ENCODE measurements at regions of chr2 and their contacts with region 1.

Region 1: GRCh38 chr2:207473049-207473930 is 56.5 kb upstream of the CREB1 start:
- ATAC-seq: peak; percentile 71 to 95 (median 90)
- H3K4me3 ChIP-seq: no peak overlapping the region
- H3K27ac ChIP-seq: peak overlapping the region; percentile 31 to 36
- H3K4me1 ChIP-seq: peaks cover 31 to 48% of the 10 kb centered on the region in 2 donors

Region 2: GRCh38 chr2:206783718-206784117 is 689.6 kb before region 1 on chr2:
- in situ Hi-C with region 1: loop called in 4 of 9 experiments (anchors 25 kb)
- ATAC-seq: peak in 2 of 8 experiments; percentile 29 to 49
- H3K4me3 ChIP-seq: no peak overlapping the region
- H3K27ac ChIP-seq: no peak overlapping the region
- H3K4me1 ChIP-seq: no peaks in the 10 kb centered on the region

Region 3: DNA sequence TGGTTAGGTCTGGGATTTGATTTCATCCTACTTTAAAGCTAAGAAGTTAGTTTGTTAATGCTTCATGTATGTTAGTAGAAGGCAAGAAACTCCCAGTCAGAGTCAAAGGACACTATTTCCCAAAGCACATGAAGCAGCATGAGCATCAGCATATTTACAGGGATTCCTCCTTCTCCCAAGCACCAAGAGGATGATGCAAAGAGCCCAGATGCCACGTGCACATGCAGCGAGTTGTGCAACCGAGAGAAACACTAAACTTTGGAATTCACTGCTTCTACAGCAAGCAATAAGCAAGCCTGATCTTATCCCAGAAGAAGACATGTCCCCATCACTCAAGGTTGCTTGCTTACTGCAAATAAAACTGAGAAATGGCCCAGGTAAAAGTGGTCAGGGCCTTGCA is 501.5 kb before region 1 on chr2:
- in situ Hi-C with region 1: loop called in 4 of 9 experiments (anchors 5 to 25 kb)
- ATAC-seq: peak in 3 of 8 experiments; percentile 37 to 93 (median 51)
- H3K4me3 ChIP-seq: no peak overlapping the region
- H3K27ac ChIP-seq: no peak overlapping the region
- H3K4me1 ChIP-seq: peaks cover 2 to 23% of the 10 kb centered on the region in 2 donors

Region 4: DNA sequence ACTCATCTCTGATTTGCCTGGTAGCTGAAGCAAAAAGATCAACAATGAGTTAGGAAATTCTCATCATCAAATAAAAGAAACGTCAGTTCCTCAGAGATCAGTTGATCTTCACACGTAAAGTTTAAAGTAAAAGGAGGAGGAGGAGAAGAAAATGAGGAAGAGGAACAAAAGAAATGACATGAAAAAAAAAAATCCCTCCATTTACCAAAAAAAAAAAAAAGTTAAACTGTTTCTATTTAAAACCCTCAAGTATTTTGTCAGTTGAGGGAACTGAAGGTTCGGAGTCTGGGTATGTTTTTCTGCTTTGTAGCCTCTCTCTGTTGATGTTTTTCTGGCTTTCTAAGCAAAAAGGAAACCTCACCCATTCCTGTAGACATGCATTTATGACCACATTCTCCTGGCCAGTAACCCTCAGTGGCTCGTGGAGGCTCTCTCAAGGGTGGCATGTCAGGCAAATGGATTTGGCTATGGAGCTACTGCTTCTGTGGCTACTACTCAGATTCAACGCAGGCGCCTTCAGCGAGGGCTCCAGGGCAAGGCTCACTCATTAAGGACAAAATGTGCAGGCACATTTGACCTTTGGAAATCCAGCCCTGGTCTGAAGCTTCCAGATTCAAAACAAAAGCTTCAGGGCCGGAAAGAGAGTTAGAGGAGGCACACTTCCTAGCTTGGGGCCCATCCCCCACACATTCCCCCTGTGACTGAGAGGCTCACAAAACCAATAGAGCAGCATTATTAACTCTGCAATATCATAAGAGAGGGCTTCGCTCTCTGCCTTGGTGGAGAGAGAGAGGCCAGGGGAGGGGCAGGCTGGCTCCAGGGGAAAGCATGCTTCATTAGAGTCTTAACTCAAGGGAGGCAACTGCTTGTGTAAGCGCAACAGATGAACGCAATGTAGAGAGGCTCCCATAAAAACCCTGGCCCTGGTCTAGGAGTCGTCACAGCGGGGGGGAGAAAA is 329.8 kb before region 1 on chr2:
- in situ Hi-C with region 1: no loop called
- ATAC-seq: peak; percentile 55 to 97 (median 94)
- H3K4me3 ChIP-seq: peak overlapping the region in 2 of 5 donors; percentile 10 to 11
- H3K27ac ChIP-seq: peak overlapping the region; percentile 41 to 51
- H3K4me1 ChIP-seq: peaks cover 29 to 33% of the 10 kb centered on the region in 2 donors

Region 5: DNA sequence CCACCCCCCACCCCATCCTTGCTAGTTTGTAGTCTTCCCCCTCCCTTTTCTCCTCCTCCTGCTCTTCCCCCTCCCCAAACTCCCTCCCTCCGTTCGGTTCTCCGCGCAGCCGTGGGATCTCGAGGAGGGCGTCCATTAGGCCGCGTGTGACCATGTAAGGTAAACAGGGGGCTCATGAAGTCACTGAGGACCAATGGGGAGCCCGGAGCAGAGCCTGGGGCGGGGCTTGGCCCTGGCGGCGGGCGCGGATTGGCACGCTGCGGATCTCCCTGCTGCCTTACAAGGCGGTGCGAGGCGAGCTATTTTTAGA is 307.3 kb before region 1 on chr2:
- in situ Hi-C with region 1: loop called in 5 of 9 experiments (anchors 10 to 25 kb)
- ATAC-seq: peak; percentile 88 to 93 (median 90)
- H3K4me3 ChIP-seq: peak overlapping the region; percentile 60 to 84 (median 71)
- H3K27ac ChIP-seq: peak overlapping the region; percentile 100
- H3K4me1 ChIP-seq: peaks cover 17 to 19% of the 10 kb centered on the region in 2 donors

Measured in motor neuron (in vitro differentiated cells).